Activated CD4-positive, alpha-beta T cell treated with anti-CD3 and anti-CD28 coated beads for 36 hours (primary cell): ENCODE measurements at regions of chr5 and their contacts with region 1.

Region 1: DNA sequence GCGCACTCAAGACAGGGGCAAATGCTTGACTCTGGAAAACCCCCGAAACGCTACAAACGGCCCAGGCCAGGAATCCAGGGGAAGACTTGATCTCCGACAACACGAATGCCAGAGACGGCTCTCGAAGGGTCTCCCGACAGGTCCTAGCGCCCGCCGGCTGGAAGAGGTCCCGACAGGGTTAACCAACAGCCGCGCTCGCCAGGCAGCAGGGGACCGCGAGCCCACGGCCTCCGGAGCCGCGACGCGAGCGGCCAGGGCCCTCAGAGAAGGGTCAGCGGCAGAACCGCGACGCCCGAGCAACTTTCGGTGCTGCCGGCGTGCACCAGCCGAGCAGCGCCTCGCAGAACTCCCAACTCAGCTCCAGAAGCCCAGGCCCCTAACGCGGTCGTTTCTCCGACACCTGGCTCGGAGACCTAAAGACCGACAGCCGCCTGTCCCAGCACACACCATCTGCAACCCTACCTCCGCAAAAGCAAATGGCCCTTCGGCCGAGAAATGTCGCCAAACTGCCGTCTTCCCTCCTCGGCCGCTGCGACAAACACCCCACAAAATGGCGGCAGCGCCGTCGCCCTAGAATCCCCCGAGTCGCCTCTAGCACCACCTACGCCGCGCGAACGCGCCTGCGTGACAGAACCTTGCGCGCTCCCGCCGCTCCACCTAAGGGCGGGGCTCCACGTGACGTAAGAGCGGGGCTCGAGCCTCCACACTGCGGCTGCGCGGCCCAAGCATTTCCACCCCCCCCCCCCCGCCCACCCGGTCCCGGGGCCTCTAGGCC is at the start of gene CLK4:
- DNase-seq: peak; percentile 98
- ATAC-seq: peak; percentile 79
- H3K4me3 Mint-ChIP-seq: peak within 1 kb of the TSS; percentile 93
- H3K27ac Mint-ChIP-seq: peak within 1 kb of the TSS; percentile 98
- H3K4me1 Mint-ChIP-seq: peaks cover 25% of the 10 kb centered on the region
- H3K27me3 Mint-ChIP-seq: no peaks in the 10 kb centered on the region
- total RNA-seq, gene CLK4: 21.2 to 22.6 TPM

Region 2: DNA sequence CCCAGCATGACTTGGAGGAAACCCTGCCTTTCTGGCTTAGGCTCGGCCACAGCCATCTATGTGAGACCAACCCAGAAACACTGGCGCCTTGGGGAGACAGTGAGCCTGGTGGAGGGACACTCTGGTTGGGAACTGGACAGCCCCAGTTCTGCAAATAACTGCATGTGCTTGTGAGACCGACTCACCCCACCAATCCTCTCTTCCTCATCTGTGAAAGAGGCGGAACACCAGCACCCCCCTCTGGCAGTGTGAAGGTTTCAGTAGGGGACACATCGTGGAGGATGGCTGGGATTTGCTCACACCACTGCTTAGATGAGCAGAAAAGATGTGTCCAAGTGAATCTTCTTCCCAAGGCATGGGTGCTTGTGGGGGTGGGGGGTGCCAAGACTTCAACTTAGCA is 556.8 kb before region 1 on chr5:
- CTCF ChIA-PET with region 1: no interaction called
- POLR2A ChIA-PET with region 1: no interaction called
- intact Hi-C with region 1: no loop called
- DNase-seq: peak; percentile 73
- ATAC-seq: peak; percentile 81
- H3K4me3 Mint-ChIP-seq: no peak overlapping the region
- H3K27ac Mint-ChIP-seq: no peak overlapping the region
- H3K4me1 Mint-ChIP-seq: peaks cover 3% of the 10 kb centered on the region
- H3K27me3 Mint-ChIP-seq: peaks cover 3% of the 10 kb centered on the region

Region 3: DNA sequence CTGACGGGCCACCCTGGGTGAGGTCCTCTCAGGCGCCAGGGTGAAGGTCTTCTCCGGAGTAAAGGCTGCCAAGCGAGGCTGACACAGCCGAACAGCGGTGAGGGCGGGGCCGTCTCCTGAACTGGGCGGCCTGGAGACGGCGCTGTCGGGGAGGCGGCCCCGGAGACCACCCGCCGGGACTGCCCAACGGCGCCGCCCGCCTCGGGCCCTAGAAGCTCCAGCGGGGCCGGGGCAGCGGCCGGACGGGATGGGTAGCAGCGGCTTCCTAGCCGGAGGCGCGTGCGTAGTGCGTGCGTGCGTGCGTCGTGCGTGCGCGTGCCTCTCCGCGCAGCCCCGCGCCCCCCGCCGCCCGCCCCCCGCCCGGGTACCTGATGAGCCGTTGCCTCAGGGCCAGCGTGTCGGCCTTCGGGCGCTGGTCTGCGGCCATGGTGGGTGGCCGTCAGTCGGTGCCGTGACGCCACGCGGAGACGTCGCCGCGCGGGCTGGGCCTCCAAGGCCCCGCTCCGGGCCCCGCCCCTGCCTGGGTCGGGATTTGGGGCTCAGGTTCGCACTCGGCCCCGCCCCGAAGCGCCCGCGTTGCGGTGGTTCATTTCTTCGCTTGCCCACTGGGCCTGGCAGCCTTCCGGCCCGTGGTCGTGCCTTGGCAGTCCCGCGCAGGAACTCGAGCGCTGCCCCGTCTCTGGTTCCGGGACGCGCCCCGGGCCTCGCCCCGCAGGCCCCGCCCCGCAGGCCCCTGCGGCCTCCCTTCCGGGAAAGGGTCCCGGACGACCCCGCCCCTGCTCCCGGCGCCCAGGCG is 394.3 kb before region 1 on chr5 and contains the start of gene PHYKPL:
- CTCF ChIA-PET with region 1: no interaction called
- POLR2A ChIA-PET with region 1: no interaction called
- intact Hi-C with region 1: loop called in 1 of 2 experiments (anchors 1 kb)
- DNase-seq: peak; percentile 81
- ATAC-seq: peak; percentile 70
- H3K4me3 Mint-ChIP-seq: peak within 1 kb of the TSS; percentile 80
- H3K27ac Mint-ChIP-seq: peak within 1 kb of the TSS; percentile 84
- H3K4me1 Mint-ChIP-seq: peaks cover 56% of the 10 kb centered on the region
- H3K27me3 Mint-ChIP-seq: no peaks in the 10 kb centered on the region
- total RNA-seq, gene PHYKPL: 67.2 to 68.4 TPM

Region 4: GRCh38 chr5:178732281-178732680 is 105.6 kb after region 1 on chr5:
- CTCF ChIA-PET with region 1: no interaction called
- POLR2A ChIA-PET with region 1: no interaction called
- intact Hi-C with region 1: loop called in 1 of 2 experiments (anchors 1 kb)
- DNase-seq: no peak
- ATAC-seq: no peak
- H3K4me3 Mint-ChIP-seq: no peak overlapping the region
- H3K27ac Mint-ChIP-seq: no peak overlapping the region
- H3K4me1 Mint-ChIP-seq: peaks cover 10% of the 10 kb centered on the region
- H3K27me3 Mint-ChIP-seq: no peaks in the 10 kb centered on the region

Region 5: GRCh38 chr5:179023528-179024430 is 397.1 kb after region 1 on chr5 and contains the start of gene ZNF879:
- CTCF ChIA-PET with region 1: no interaction called
- POLR2A ChIA-PET with region 1: no interaction called
- intact Hi-C with region 1: loop called (anchors 2 to 5 kb)
- DNase-seq: peak; percentile 96
- ATAC-seq: peak; percentile 97
- H3K4me3 Mint-ChIP-seq: peak within 1 kb of the TSS; percentile 77
- H3K27ac Mint-ChIP-seq: peak within 1 kb of the TSS; percentile 89
- H3K4me1 Mint-ChIP-seq: peaks cover 11% of the 10 kb centered on the region
- H3K27me3 Mint-ChIP-seq: no peaks in the 10 kb centered on the region
- total RNA-seq, gene ZNF879: 2.1 to 3.2 TPM

Region 6: GRCh38 chr5:179142434-179143198 is 515.9 kb after region 1 on chr5:
- CTCF ChIA-PET with region 1: no interaction called
- POLR2A ChIA-PET with region 1: no interaction called
- intact Hi-C with region 1: loop called in 1 of 2 experiments (anchors 2 kb)
- DNase-seq: peak; percentile 67
- ATAC-seq: peak; percentile 87
- H3K4me3 Mint-ChIP-seq: no peak overlapping the region
- H3K27ac Mint-ChIP-seq: peak overlapping the region; percentile 88
- H3K4me1 Mint-ChIP-seq: peaks cover 37% of the 10 kb centered on the region
- H3K27me3 Mint-ChIP-seq: no peaks in the 10 kb centered on the region

Region 7: DNA sequence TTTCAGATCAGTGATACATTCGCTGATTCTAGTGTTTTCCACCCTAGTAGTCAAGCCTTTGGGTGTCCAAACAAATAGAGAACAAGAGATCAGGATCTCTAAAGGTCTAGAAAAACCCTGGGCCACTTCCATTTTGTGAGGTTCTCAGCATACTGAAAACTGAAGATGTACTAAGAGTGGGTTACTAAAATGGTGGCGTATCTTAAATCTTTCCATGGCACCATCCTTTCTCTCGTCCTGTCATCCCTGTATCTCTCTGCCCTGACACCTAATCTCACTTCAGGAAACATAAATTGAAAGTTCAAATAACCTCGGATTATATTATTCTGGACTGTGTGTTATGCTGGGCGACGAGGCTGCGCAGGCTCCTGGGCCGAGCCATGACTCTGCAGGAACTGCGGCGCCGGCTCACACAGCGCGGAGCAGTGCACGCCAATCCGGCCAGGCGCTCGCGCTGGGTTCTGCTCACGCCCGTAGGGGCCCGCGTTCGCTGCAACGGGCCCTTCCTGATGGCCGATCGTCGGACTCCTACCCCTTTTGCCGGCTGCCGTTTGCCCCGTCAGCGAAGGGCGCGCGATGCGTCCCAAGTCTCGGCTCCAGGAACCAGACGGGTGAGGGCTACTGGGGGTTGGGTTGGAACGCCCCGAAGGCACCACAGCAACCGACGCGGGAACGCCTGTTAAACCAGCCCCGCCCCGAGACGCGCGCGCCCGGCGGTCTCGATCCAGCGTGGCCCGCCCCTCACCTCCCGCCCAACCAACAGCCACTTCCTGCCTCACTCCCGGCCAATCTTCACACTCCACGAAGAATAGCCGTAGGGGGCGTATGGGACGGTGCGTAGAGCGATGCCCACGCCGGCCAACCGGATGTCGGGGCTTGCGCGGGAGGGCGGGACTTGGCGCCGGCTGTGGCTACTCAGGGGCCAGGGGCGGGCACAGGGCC is 1071.6 kb after region 1 on chr5:
- CTCF ChIA-PET with region 1: no interaction called
- POLR2A ChIA-PET with region 1: no interaction called
- intact Hi-C with region 1: loop called in 1 of 2 experiments (anchors 5 kb)
- DNase-seq: peak; percentile 99
- ATAC-seq: peak; percentile 89
- H3K4me3 Mint-ChIP-seq: peak overlapping the region; percentile 94
- H3K27ac Mint-ChIP-seq: peak overlapping the region; percentile 100
- H3K4me1 Mint-ChIP-seq: peaks cover 34% of the 10 kb centered on the region
- H3K27me3 Mint-ChIP-seq: no peaks in the 10 kb centered on the region